Heart left ventricle (tissue), 16 donors: ENCODE measurements at regions of chr3 and their contacts with region 1.

Region 1: GRCh38 chr3:109023656-109024254 is 70.1 kb upstream of the GUCA1C start:
- DNase-seq: peak in 3 of 5 donors; percentile 16 to 46 (median 24)
- ATAC-seq: no peak
- H3K4me3 ChIP-seq: no peak overlapping the region
- H3K27ac ChIP-seq: no peak overlapping the region
- H3K4me1 ChIP-seq: no peaks in the 10 kb centered on the region
- H3K27me3 ChIP-seq: no peaks in the 10 kb centered on the region
- CTCF ChIP-seq: peak; percentile 50 to 78 (median 68)
- POLR2A ChIP-seq: no peak

Region 2: DNA sequence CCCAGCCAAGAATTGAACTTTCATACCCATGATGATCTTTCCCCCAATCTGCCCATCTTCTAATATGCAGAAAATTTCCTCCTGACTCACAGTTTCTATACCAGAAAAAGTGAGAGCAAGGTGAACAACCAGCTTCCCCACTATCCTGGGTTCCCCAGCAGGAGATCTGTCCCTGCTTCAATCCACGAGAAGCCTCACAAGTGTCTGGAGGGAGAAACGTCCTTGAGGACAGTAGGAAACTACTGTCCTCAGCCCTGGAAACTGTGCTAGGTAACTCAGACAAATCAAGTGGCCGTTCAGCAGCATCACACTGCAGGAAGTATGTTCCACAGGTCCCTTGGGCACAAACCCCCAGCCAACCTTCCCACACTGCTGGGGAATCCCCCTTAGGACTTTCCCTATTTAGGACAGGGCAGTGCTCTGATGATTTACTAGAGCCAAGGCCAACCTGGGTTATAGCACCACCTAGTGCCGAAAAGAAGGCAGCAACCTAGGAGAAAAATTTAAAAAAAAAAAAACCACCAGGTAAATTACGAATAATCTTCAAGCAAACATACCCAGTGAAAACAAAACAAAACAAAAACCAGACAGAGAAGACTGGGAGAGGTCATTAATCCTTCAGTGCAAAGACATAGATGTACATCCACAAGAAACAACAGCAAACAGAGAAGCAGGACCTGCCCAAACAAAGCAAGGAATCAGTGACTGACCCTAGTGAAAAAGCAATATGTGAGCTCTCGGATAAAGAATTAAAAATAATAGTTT is 58.2 kb after region 1 on chr3:
- intact Hi-C with region 1: loop called (anchors 1 to 10 kb)
- DNase-seq: no peak
- ATAC-seq: peak in 2 of 4 donors; percentile 41 to 54
- H3K4me3 ChIP-seq: no peak overlapping the region
- H3K27ac ChIP-seq: no peak overlapping the region
- H3K4me1 ChIP-seq: no peaks in the 10 kb centered on the region
- H3K27me3 ChIP-seq: no peaks in the 10 kb centered on the region
- CTCF ChIP-seq: peak; percentile 46 to 66 (median 52)
- POLR2A ChIP-seq: no peak

Region 3: DNA sequence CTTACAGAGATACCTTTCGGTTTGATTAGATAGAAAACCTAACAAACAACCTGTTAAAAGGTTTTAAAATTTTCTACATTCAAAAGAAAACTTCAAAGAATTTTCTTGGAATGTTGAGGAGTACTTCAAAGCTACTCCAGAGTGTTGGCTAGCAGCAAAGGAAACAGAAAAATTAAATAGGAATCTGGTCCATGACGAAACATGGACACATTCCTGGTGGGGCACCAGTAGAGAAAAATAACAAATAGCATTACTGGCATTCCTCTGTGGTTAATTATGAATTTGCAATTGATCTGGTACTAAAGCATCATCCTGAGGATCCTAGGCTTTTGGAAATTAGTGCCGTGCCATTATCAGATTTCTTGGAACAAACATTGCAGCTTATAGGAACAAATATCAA is 373.1 kb after region 1 on chr3:
- intact Hi-C with region 1: loop called in 2 of 10 experiments (anchors 5 to 10 kb)
- DNase-seq: no peak
- ATAC-seq: no peak
- H3K4me3 ChIP-seq: no peak overlapping the region
- H3K27ac ChIP-seq: no peak overlapping the region
- H3K4me1 ChIP-seq: no peaks in the 10 kb centered on the region
- H3K27me3 ChIP-seq: no peaks in the 10 kb centered on the region
- CTCF ChIP-seq: no peak
- POLR2A ChIP-seq: no peak